T-cell (primary cell): ENCODE measurements at regions of chr6 and their contacts with region 1.

Region 1: GRCh38 chr6:49676696-49677281 is 36.6 kb downstream of the CRISP2 start:
- DNase-seq: no peak
- ATAC-seq: no peak
- H3K4me3 ChIP-seq: no peak overlapping the region
- H3K4me3 Mint-ChIP-seq: no peak overlapping the region
- H3K27ac ChIP-seq: no peak overlapping the region
- H3K27ac Mint-ChIP-seq: no peak overlapping the region
- H3K4me1 ChIP-seq: no peaks in the 10 kb centered on the region
- H3K4me1 Mint-ChIP-seq: no peaks in the 10 kb centered on the region
- H3K27me3 ChIP-seq: no peaks in the 10 kb centered on the region
- H3K27me3 Mint-ChIP-seq: no peaks in the 10 kb centered on the region

Region 2: DNA sequence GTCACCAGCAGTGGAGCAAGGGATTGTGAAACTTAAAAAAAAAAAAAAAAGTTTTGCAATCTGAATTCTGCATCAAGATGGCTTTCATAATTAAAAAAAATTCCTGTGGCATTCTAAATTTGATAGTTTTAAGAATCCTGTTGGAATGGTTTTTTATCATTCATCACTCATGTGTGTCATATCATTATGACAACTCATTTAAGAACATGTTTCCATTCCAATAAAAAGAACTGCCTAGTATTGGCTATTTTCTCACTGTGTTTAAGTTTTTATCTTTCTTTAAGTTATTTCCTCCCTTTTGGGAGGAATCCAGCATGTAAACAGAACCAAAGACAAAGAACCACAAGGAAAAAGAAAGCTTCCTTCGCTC is 13.9 kb before region 1 on chr6:
- CTCF ChIA-PET with region 1: no interaction called
- POLR2A ChIA-PET with region 1: interaction called in 1 of 2 experiments, 16 read pairs
- DNase-seq: no peak
- ATAC-seq: no peak
- H3K4me3 ChIP-seq: no peak overlapping the region
- H3K4me3 Mint-ChIP-seq: no peak overlapping the region
- H3K27ac ChIP-seq: no peak overlapping the region
- H3K27ac Mint-ChIP-seq: no peak overlapping the region
- H3K4me1 ChIP-seq: no peaks in the 10 kb centered on the region
- H3K4me1 Mint-ChIP-seq: no peaks in the 10 kb centered on the region
- H3K27me3 ChIP-seq: no peaks in the 10 kb centered on the region
- H3K27me3 Mint-ChIP-seq: no peaks in the 10 kb centered on the region

Region 3: GRCh38 chr6:49720372-49720771 is 43.6 kb after region 1 on chr6:
- CTCF ChIA-PET with region 1: no interaction called
- POLR2A ChIA-PET with region 1: interaction called in 1 of 2 experiments, 14 read pairs
- DNase-seq: no peak
- ATAC-seq: no peak
- H3K4me3 ChIP-seq: no peak overlapping the region
- H3K4me3 Mint-ChIP-seq: no peak overlapping the region
- H3K27ac ChIP-seq: no peak overlapping the region
- H3K27ac Mint-ChIP-seq: no peak overlapping the region
- H3K4me1 ChIP-seq: no peaks in the 10 kb centered on the region
- H3K4me1 Mint-ChIP-seq: no peaks in the 10 kb centered on the region
- H3K27me3 ChIP-seq: no peaks in the 10 kb centered on the region
- H3K27me3 Mint-ChIP-seq: no peaks in the 10 kb centered on the region